ENCODE measurements at regions of chr1 and their contacts with region 1.

Region 1: DNA sequence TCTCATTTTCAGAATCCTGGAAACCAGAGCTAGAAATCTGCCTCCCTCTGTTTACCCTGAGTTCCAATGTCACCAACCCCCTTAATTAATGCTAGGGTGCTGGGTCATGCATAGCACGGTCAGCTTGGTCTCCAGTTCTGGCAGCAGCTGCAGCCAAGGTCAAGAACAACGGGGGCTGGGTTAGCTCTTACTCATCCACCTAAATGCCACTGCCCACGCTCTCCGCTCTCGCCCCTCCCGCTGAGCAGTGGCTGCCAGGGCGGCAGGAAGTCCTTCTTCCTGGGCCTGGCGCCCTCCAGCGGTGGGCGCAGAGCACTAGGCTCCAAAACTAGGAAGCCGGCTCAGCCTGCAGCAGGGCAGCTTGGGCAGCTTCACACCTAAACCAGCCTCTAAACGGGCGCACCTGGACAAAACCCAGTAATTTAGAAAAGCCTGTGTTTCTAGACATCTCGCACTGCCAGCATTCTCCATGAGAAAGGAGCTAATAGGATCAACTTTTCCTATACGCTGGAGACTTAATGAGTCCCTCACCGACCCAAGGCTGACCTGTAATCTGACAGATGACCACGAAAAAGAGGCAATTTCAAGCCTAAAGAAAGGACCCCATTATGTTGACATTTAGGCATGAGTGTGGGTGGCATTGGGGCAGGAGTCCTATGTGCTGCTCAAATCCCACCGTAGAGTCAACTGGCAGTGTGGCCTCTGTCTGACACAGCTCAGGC is 78.3 kb upstream of the LRRN2 start:
- DNase-seq: peak; percentile 92
- ATAC-seq: peak; percentile 99
- H3K4me3 Mint-ChIP-seq: no peak overlapping the region
- H3K27ac Mint-ChIP-seq: no peak overlapping the region
- H3K4me1 Mint-ChIP-seq: peaks cover 10% of the 10 kb centered on the region
- H3K27me3 Mint-ChIP-seq: peaks cover 4% of the 10 kb centered on the region
- CTCF ChIP-seq: peak; percentile 87

Region 2: DNA sequence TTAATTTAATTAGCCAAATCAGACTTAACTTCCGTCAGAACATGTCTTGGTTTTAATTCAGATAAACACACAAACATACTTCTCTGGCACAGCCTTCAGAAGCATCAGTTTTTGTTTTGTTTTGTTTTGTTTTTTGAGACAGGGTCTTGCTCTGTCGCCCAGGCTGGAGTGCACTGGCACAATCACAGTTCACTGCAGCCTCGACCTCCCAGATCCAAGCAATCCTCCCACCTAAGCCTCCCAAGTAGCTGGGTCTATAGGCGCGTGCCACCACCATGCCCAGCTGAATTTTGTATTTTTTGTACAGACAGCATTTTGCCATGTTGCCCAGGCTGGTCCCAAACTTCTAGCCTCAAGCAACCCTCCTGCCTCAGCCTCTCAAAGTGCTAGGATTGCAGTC is 212.9 kb before region 1 on chr1:
- CTCF ChIA-PET with region 1: interaction called, 13 read pairs
- POLR2A ChIA-PET with region 1: no interaction called
- intact Hi-C with region 1: no loop called
- DNase-seq: no peak
- ATAC-seq: no peak
- H3K4me3 Mint-ChIP-seq: no peak overlapping the region
- H3K27ac Mint-ChIP-seq: no peak overlapping the region
- H3K4me1 Mint-ChIP-seq: peaks cover 23% of the 10 kb centered on the region
- H3K27me3 Mint-ChIP-seq: no peaks in the 10 kb centered on the region
- CTCF ChIP-seq: no peak

Region 3: GRCh38 chr1:204565617-204566582 is 198.0 kb before region 1 on chr1:
- CTCF ChIA-PET with region 1: interaction called, 98 read pairs
- POLR2A ChIA-PET with region 1: interaction called, 5 read pairs
- intact Hi-C with region 1: loop called (anchors 2 kb)
- DNase-seq: peak; percentile 80
- ATAC-seq: peak; percentile 86
- H3K4me3 Mint-ChIP-seq: no peak overlapping the region
- H3K27ac Mint-ChIP-seq: peak overlapping the region; percentile 77
- H3K4me1 Mint-ChIP-seq: peaks cover 45% of the 10 kb centered on the region
- H3K27me3 Mint-ChIP-seq: no peaks in the 10 kb centered on the region
- CTCF ChIP-seq: peak; percentile 66

Region 4: DNA sequence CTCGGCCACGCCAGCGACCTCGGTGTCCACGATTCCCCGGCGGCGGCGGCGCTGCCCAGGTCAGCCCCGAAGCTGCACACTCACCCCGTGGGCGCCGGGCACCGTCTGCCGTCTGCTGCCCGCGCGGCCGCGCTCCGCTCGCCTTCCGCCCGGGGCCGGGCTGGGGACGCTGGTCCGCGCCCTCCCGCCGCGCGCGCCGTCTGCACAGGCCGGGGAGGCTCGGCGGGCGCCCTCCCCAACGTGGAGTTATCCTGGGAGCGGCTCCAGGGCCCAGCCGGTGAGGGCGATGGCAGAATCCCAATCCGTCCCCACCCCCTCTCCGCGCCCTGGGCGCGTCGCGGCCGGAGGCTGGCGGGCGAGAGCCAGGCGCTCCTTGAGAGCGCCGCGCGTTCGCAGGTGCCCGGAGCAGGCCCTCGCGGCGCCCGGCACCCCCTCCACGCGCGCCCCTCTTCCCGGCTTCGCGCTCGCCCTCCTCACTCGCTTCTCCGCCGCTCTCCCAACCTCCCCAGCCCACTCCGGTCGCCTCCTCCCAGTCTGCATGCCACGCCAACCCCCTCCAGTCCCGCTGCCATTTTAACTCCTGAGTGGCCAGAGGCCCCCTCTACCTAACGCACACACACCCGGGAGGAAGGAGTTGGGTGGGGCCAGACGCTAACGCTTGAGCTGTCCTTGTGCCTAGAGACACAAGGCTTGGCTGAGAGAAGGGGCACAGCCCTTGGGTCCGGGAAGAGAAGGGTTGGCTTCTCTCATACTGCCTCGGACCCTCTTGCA is 78.4 kb before region 1 on chr1 and contains the start of gene LRRN2:
- CTCF ChIA-PET with region 1: interaction called, 26 read pairs
- POLR2A ChIA-PET with region 1: no interaction called
- intact Hi-C with region 1: no loop called
- DNase-seq: no peak
- ATAC-seq: peak; percentile 30
- H3K4me3 Mint-ChIP-seq: peak within 1 kb of the TSS; percentile 52
- H3K27ac Mint-ChIP-seq: no peak within 1 kb of the TSS
- H3K4me1 Mint-ChIP-seq: peaks cover 9% of the 10 kb centered on the region
- H3K27me3 Mint-ChIP-seq: peaks cover 28% of the 10 kb centered on the region
- CTCF ChIP-seq: no peak
- total RNA-seq, gene LRRN2: not detected

Region 5: DNA sequence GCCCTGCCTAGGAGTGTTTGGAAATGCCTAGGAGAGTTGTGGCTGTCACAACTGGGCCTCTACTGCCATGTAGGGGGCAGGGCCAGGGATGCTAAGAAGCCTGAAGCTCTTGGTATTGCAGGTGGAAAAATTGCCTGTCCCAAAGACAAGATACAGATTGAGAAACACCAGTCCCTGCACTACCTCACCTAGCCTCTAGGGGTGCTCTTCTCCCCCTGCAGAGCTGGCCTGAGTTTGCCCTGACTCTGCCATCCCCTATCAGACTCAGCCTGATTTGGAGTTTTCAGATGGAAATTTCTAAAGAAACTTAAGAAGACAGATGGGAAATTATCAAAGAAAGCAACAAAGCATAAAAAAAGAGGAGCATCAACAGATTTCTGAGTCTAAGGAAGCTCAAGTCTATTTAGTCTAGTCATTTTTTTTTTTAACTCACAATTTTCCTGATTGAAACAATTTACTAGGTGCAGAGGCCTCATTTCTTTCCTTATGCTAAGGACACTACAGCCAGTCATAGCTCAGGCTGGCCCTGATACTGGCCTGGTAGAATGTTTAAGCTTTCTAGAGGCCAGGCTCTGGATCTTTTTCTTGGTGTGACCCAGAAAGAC is 16.9 kb before region 1 on chr1:
- CTCF ChIA-PET with region 1: interaction called, 158 read pairs
- POLR2A ChIA-PET with region 1: interaction called, 3 read pairs
- intact Hi-C with region 1: no loop called
- DNase-seq: peak; percentile 68
- ATAC-seq: peak; percentile 99
- H3K4me3 Mint-ChIP-seq: no peak overlapping the region
- H3K27ac Mint-ChIP-seq: no peak overlapping the region
- H3K4me1 Mint-ChIP-seq: no peaks in the 10 kb centered on the region
- H3K27me3 Mint-ChIP-seq: peaks cover 6% of the 10 kb centered on the region
- CTCF ChIP-seq: peak; percentile 91

Region 6: GRCh38 chr1:204853436-204853835 is 89.6 kb after region 1 on chr1:
- CTCF ChIA-PET with region 1: no interaction called
- POLR2A ChIA-PET with region 1: no interaction called
- intact Hi-C with region 1: no loop called
- DNase-seq: no peak
- ATAC-seq: no peak
- H3K4me3 Mint-ChIP-seq: no peak overlapping the region
- H3K27ac Mint-ChIP-seq: no peak overlapping the region
- H3K4me1 Mint-ChIP-seq: no peaks in the 10 kb centered on the region
- H3K27me3 Mint-ChIP-seq: peaks cover 8% of the 10 kb centered on the region
- CTCF ChIP-seq: no peak